ENCODE measurements at regions of chr11 and their contacts with region 1.

Region 1: GRCh38 chr11:15585602-15586331 is 471.0 kb downstream of the INSC start:
- DNase-seq: no peak
- H3K4me3 Mint-ChIP-seq: no peak overlapping the region
- H3K27ac Mint-ChIP-seq: no peak overlapping the region
- H3K4me1 Mint-ChIP-seq: no peaks in the 10 kb centered on the region
- H3K27me3 Mint-ChIP-seq: no peaks in the 10 kb centered on the region
- CTCF ChIP-seq: no peak

Region 2: DNA sequence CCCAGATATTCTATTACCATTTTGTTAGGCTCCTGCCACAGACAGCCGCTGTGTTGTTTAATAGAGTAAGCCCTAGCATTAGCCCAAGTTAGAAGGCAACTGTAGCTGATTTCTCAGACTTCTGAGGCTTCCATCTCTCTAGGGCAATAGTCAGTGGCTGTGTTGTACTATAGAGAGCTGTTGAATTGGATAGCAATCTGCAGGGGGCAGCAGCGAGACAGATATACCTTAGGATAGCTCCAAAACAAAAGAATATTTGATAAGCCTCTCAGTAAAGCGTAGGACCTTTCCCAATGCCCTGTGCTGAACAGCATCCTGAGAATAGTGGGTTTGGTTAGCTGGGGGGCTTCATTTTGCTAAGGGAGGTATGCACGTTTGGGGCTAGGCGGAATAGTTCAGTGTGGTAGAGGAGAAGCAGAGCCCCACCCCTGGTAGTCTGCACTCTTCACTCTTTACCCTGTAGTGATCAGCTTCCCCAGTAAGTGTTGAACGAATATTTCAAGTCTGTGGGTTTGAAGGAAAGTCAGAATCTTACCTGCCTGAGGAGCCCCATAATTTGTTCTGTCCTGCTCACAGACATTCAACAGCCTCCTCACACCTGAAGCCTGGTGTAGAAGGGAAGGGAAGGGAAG is 44.0 kb after region 1 on chr11:
- CTCF ChIA-PET with region 1: interaction called, 10 read pairs
- intact Hi-C with region 1: no loop called
- DNase-seq: peak; percentile 64
- H3K4me3 Mint-ChIP-seq: no peak overlapping the region
- H3K27ac Mint-ChIP-seq: no peak overlapping the region
- H3K4me1 Mint-ChIP-seq: peaks cover 27% of the 10 kb centered on the region
- H3K27me3 Mint-ChIP-seq: no peaks in the 10 kb centered on the region
- CTCF ChIP-seq: no peak

Measured in Calu3 (cell line).